WTC11 (cell line): ENCODE measurements at regions of chr2 and their contacts with region 1.

Region 1: DNA sequence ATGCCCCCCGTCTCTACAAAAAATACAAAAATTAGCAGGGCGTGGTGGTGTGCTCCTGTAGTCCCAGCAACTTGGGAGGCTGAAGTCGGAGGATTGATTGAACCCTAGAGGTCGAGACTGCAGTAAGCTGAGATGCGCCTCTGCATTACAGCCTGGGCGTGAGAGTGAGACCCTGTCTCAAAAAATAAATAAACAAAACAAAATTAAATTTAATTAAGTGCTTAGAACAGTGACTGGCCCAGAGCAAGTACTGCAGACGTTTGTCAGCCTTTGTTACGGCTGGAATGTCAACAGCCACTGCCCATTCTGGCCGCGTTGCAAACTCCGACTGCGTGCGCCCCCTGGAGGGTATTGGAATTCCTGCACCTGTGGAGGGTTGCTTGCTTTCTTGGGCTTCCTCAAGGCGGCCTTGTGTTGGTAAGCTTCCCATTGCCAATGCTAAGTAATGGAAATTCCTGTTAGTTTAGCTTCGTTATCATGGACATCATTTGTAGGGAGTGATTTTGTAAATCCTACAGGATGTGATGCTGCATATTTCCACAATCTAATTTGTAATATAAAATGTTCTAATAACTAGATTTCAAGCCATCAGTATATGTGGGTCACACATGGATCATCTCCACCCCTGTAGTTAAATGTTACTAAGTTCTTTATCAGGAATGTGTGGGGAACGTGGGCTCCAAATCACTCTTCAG is 15.9 kb upstream of the ATP6V1B1 start:
- DNase-seq: peak; percentile 94
- ATAC-seq: peak; percentile 88
- H3K4me3 Mint-ChIP-seq: no peak overlapping the region
- H3K27ac Mint-ChIP-seq: no peak overlapping the region
- H3K4me1 Mint-ChIP-seq: peaks cover 13% of the 10 kb centered on the region
- H3K27me3 Mint-ChIP-seq: peaks cover 34% of the 10 kb centered on the region
- CTCF ChIP-seq: peak; percentile 92

Region 2: GRCh38 chr2:70498054-70498453 is 421.8 kb before region 1 on chr2:
- CTCF ChIA-PET with region 1: no interaction called
- POLR2A ChIA-PET with region 1: no interaction called
- DNase-seq: no peak
- ATAC-seq: peak; percentile 96
- H3K4me3 Mint-ChIP-seq: no peak overlapping the region
- H3K27ac Mint-ChIP-seq: no peak overlapping the region
- H3K4me1 Mint-ChIP-seq: peaks cover 16% of the 10 kb centered on the region
- H3K27me3 Mint-ChIP-seq: peaks cover 22% of the 10 kb centered on the region
- CTCF ChIP-seq: peak; percentile 35; the same call in 1 of the 2 replicates

Region 3: GRCh38 chr2:70907130-70908057 is 12.4 kb before region 1 on chr2:
- CTCF ChIA-PET with region 1: interaction called, 17 read pairs
- POLR2A ChIA-PET with region 1: no interaction called
- DNase-seq: no peak
- ATAC-seq: peak; percentile 10; the same call in 1 of the 2 replicates
- H3K4me3 Mint-ChIP-seq: peak overlapping the region; percentile 57
- H3K27ac Mint-ChIP-seq: no peak overlapping the region
- H3K4me1 Mint-ChIP-seq: peaks cover 31% of the 10 kb centered on the region
- H3K27me3 Mint-ChIP-seq: peaks cover 100% of the 10 kb centered on the region
- CTCF ChIP-seq: no peak

Region 4: DNA sequence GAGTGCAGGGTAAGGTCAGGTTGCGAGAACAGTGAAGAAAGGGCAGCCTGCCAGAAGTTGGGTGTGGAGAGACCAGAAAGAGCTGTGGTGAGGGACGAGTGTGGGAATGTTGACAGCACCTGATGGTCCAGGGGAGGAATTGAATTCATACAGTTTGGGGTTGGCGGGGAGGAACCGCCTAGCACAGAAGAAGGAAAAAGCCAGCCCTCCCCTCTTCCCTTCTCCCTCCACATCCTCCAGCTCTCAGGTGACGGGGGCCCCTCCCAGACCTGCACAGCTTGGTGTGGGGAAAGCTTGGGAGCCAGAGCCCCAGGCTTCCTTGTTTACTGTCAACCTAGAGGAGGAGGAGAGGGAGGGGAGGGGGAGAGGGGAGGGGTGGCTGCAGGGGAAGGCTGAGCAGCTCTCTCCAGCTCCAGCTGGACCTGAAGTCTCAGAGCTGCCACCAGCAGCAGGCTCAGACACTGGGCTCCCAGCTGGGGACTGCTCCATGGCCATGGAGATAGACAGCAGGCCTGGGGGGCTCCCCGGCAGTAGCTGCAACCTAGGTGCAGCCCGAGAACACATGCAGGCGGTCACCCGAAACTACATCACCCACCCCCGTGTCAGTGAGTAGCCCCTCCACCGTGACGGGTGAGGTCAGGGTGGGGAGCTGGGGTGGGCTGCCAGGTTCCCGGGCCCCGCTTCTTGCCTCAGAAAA is 15.8 kb after region 1 on chr2 and contains the start of gene ATP6V1B1:
- CTCF ChIA-PET with region 1: interaction called, 17 read pairs
- POLR2A ChIA-PET with region 1: interaction called, 3 read pairs
- DNase-seq: peak; percentile 53
- ATAC-seq: peak; percentile 20
- H3K4me3 Mint-ChIP-seq: no peak within 1 kb of the TSS
- H3K27ac Mint-ChIP-seq: no peak within 1 kb of the TSS
- H3K4me1 Mint-ChIP-seq: peaks cover 25% of the 10 kb centered on the region
- H3K27me3 Mint-ChIP-seq: peaks cover 48% of the 10 kb centered on the region
- CTCF ChIP-seq: no peak
- total RNA-seq, gene ATP6V1B1: not detected in 3 replicates